Activated B cell treated with CpG ODN at 0.5 μM for 24 hours (primary cell): ENCODE measurements at regions of chr5 and their contacts with region 1.

Region 1: DNA sequence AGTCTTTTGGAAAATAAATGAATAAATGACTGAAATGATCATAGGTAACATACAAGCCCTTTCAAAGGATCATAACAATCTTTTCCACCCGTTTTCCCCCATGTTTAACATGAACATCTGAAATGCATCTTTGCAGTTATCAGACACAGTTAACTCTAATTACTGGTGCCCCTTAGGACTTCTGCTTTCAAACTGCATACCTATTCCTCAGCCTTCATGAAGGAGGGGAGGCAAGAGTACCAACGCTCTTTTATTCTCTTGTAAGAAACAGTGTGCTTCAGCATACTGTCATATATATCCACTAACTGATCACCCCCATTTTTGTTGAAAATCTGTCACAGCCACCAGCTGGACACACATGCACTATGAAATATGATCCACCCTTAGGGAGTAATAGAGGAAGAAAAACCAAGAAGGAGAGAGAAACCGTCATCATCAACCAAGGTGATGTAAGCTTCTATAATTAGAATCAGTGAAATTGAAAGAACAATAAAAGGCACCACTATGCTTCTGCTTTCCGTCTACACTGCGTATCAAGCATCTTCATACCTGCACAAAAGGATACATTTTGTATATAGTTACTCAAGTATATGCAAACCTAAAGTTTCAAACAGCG is 98.7 kb downstream of the RAPGEF6 start:
- DNase-seq: no peak
- ATAC-seq: peak; percentile 84
- H3K4me3 Mint-ChIP-seq: peak overlapping the region; percentile 47
- H3K27ac Mint-ChIP-seq: peak overlapping the region; percentile 81
- H3K4me1 Mint-ChIP-seq: peaks cover 46% of the 10 kb centered on the region
- H3K27me3 Mint-ChIP-seq: no peaks in the 10 kb centered on the region
- CTCF ChIP-seq: no peak

Region 2: DNA sequence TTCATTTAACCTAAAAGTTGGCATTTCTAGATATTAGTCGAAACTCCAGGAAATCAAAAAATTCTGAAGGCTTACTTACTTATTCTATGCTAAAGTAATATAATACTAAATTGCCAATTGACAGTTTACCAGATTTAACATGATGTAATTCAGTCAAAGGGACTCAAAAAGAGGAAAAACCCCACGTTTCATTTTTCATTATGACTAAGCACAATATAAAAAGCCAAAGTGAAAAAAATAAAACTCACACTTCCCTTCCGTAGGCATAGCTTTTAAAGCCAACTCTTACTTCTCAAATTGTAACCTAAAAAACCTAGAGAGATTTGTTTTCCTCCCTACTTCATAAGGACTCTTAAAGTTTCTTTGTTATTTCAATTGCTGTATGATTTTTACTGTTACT is 47.9 kb before region 1 on chr5:
- CTCF ChIA-PET with region 1: interaction called, 3 read pairs
- POLR2A ChIA-PET with region 1: no interaction called
- intact Hi-C with region 1: loop called (anchors 1 kb)
- DNase-seq: no peak
- ATAC-seq: peak; percentile 72
- H3K4me3 Mint-ChIP-seq: peak overlapping the region; percentile 46
- H3K27ac Mint-ChIP-seq: peak overlapping the region; percentile 80
- H3K4me1 Mint-ChIP-seq: peaks cover 23% of the 10 kb centered on the region
- H3K27me3 Mint-ChIP-seq: no peaks in the 10 kb centered on the region
- CTCF ChIP-seq: no peak

Region 3: GRCh38 chr5:131496400-131497007 is 39.8 kb before region 1 on chr5:
- CTCF ChIA-PET with region 1: no interaction called
- POLR2A ChIA-PET with region 1: no interaction called
- intact Hi-C with region 1: loop called (anchors 2 kb)
- DNase-seq: no peak
- ATAC-seq: peak; percentile 94
- H3K4me3 Mint-ChIP-seq: no peak overlapping the region
- H3K27ac Mint-ChIP-seq: peak overlapping the region; percentile 59
- H3K4me1 Mint-ChIP-seq: peaks cover 20% of the 10 kb centered on the region
- H3K27me3 Mint-ChIP-seq: no peaks in the 10 kb centered on the region
- CTCF ChIP-seq: no peak

Region 4: DNA sequence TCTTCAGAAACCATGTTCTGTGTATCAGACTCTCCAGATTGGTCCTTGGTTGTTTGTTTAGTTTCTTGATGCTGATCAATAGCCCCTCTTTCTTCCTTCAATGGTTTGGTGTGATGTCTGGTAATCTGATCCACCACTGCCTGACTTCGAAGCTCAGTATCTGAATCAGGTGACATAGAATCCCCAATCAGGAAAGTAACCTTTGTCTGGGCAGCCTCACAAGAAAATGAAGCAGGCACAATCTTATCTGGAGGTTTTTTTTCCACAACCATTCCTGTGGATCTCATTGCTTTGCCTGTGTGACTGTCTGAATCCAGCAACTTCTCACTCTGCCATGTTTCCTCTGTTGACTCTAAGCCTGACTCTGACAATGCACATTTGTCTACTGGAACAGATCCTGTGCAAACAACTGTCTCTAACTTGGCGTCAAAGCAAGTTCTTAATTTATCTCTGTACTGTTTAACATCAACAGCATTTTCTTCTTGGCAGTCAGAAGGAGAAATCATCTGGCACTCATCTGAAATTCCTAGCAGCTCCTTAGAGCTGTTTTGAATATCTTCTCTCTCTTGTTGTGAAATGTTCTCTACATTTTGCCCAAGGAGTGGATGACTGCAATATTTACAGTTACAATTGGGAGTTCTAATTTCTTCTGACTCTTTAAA is 135.8 kb after region 1 on chr5:
- CTCF ChIA-PET with region 1: no interaction called
- POLR2A ChIA-PET with region 1: no interaction called
- intact Hi-C with region 1: no loop called
- DNase-seq: no peak
- ATAC-seq: no peak
- H3K4me3 Mint-ChIP-seq: no peak overlapping the region
- H3K27ac Mint-ChIP-seq: no peak overlapping the region
- H3K4me1 Mint-ChIP-seq: peaks cover 30% of the 10 kb centered on the region
- H3K27me3 Mint-ChIP-seq: no peaks in the 10 kb centered on the region
- CTCF ChIP-seq: no peak

Region 5: DNA sequence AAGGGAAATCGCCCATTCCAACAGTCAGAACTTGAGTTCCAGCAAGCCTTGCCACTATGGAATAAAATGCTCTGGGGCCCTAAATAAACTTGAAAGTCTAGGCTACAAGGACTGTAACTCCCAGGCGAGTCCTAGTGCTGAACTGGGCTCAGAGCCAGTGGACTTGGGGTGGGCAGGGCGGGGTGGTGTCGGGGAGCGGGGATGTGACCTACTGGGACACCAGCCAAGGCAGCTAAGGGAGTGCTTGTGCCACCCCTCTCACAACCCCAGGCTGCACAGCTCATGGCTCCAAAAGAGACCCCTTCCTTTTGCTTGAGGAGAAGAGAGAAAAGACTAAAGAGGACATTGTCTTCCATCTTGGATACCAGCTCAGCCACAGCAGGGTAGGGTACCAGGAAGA is 347.7 kb after region 1 on chr5:
- CTCF ChIA-PET with region 1: no interaction called
- POLR2A ChIA-PET with region 1: no interaction called
- intact Hi-C with region 1: no loop called
- DNase-seq: no peak
- ATAC-seq: no peak
- H3K4me3 Mint-ChIP-seq: no peak overlapping the region
- H3K27ac Mint-ChIP-seq: no peak overlapping the region
- H3K4me1 Mint-ChIP-seq: no peaks in the 10 kb centered on the region
- H3K27me3 Mint-ChIP-seq: peaks cover 3% of the 10 kb centered on the region
- CTCF ChIP-seq: no peak